WTC11 (cell line): ENCODE measurements at regions of chr16 and their contacts with region 1.

Region 1: DNA sequence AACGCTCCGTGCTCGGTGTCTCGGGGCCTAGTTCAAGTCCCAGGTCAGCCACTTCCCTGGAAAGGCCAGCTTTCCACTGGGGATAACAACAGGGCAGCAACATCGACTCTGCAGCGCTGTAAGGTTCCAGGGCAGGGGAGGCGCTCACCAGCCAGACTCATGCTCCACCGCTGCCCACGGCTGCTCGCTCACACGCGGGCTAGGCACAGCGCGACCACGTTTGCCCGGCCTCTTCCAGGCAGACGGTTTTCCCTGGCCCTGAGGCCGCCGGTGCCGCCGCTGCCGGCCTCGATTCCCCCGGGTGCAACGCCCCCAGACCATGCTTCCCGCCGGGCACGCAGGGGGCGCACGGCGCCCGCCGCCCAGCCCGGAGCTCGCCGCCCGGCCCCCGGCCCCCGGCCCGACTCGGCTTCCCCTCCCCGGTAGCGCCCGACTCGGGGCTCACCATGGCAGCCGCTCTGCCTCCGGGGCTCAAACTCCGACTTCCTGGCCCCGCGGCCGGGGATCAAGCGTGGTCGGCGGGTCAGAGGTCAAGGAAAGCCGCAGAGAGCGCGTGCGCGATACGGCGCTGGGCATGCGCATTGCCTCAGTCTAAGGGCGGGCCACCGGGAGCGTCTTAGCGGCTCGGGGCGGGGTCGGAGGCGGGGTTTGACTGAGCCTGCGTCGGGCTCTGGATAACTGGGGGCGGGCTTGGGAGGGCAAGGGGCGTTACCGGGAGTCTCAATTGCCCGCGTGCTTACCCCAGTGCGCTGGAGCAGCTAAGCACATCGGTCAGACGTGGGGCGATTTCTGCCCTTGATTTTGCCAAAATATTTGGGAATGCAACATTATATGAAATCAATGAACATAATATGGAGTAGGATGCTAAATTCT is at the start of gene PAM16:
- DNase-seq: peak; percentile 99
- ATAC-seq: peak; percentile 96
- H3K4me3 Mint-ChIP-seq: peak within 1 kb of the TSS; percentile 95
- H3K27ac Mint-ChIP-seq: peak within 1 kb of the TSS; percentile 70
- H3K4me1 Mint-ChIP-seq: peaks cover 11% of the 10 kb centered on the region
- H3K27me3 Mint-ChIP-seq: 0 out of 2 replicates have a peak, but pooled peaks cover 3% of the 10 kb centered on the region
- CTCF ChIP-seq: no peak
- total RNA-seq, gene PAM16: 87.2 to 93.7 TPM (median 88.9 TPM) in 3 replicates

Region 2: DNA sequence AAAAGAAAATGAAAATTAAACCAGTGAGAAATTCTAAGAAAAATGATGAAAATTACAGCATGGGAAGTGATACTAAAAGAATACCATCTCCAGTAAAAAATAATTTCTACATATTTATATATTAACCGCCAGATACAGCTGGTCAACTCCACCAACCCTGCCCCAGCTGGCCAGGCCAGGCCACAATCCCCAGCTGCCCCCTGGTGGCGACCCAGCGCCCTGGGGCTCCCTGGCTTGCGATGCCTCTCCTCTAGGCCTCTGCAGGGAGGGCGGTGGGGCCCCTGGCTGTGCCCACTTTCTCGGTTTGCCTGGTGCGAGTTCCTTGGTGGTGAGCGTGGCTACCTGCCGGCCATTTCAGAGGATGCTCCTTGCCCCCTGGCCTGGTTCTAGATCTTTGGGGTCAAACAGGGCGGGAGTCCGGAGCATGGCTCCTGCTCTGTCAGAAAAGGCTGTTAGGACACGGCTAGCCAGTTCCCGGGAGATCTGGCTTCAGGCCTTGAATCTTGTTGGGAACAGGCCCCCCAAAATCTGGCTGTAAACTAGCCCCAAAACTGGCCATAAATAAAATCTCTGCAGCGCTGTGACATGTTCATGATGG is 20.6 kb before region 1 on chr16:
- CTCF ChIA-PET with region 1: interaction called, 22 read pairs
- POLR2A ChIA-PET with region 1: interaction called, 5 read pairs
- DNase-seq: peak; percentile 86
- ATAC-seq: peak; percentile 27
- H3K4me3 Mint-ChIP-seq: no peak overlapping the region
- H3K27ac Mint-ChIP-seq: no peak overlapping the region
- H3K4me1 Mint-ChIP-seq: peaks cover 18% of the 10 kb centered on the region
- H3K27me3 Mint-ChIP-seq: no peaks in the 10 kb centered on the region
- CTCF ChIP-seq: peak; percentile 93

Region 3: DNA sequence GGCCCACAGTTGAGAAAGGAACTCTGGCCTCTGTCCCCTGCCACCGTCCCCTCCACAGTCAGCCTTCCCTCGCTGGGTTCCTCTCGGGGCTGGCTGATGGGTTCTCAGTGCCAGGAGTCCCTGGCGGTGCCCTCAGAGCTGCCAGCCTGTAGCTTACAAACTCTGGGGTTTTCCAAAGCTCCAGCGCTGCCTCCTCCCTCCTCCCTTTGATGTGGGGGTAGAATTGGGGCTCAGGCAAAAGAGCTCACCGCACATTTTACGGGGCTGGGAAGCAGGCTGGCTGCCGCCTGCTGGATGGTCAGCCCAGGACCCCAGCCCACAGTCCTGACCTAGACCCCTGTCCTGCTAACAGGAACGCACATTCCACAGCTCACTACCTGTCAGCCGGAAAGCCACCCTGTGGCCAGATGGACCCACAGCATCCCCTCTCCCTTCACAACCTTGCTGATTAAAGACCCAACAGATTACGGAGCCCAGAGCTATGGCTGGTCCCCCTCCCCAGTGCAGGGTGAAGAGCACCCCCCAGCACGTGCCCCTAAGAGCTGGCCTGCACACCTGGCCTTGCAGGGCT is 26.6 kb after region 1 on chr16:
- CTCF ChIA-PET with region 1: interaction called, 18 read pairs
- POLR2A ChIA-PET with region 1: no interaction called
- DNase-seq: no peak
- ATAC-seq: peak; percentile 46
- H3K4me3 Mint-ChIP-seq: no peak overlapping the region
- H3K27ac Mint-ChIP-seq: peak overlapping the region; percentile 64
- H3K4me1 Mint-ChIP-seq: peaks cover 47% of the 10 kb centered on the region
- H3K27me3 Mint-ChIP-seq: no peaks in the 10 kb centered on the region
- CTCF ChIP-seq: no peak

Region 4: DNA sequence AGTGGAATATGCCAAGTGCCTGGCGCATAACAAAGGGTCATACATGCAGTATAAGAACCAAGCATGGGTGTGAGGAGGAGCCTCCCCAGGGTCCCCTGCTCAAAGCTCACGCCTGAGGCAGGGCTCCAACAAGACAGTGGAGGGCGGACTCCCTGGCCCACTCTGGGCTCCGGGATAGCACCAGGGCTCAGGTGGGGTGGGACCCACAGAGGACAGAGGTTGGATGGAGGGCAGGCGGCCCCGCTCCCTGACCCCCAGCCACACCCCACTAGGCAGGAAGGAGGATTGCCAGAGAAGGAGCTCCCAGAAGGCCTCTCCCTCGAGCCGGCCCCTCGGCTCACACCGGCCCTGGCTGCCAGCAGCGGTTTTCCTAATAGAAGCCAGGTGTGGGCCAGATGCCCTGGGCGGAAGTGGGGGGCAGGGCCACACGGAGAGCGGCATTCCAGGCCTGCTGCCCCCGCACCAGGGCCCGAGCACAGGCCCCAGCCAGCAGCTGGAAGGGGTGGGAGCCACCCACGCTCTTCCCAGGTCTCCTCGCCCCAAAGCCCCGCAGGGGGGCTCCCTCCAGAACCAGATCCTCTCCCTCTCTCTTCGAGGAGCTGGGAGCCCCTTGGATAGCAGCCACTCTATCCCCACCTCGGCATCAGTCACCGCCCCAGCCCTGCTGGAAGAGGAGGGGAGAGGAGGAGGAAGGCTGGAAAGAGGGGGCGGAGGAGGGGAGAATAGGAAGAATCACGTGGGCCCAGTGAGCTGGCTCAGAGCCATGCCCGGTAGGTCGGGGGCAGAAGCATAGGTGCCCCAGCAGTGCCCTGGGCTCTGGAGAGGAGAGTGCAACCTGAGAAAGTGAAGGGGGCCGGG is 41.6 kb after region 1 on chr16:
- CTCF ChIA-PET with region 1: interaction called, 17 read pairs
- POLR2A ChIA-PET with region 1: interaction called, 6 read pairs
- DNase-seq: peak; percentile 81
- ATAC-seq: peak; percentile 76
- H3K4me3 Mint-ChIP-seq: peak overlapping the region; percentile 20; the same call in 1 of the 2 replicates
- H3K27ac Mint-ChIP-seq: peak overlapping the region; percentile 92
- H3K4me1 Mint-ChIP-seq: peaks cover 48% of the 10 kb centered on the region
- H3K27me3 Mint-ChIP-seq: no peaks in the 10 kb centered on the region
- CTCF ChIP-seq: no peak

Region 5: DNA sequence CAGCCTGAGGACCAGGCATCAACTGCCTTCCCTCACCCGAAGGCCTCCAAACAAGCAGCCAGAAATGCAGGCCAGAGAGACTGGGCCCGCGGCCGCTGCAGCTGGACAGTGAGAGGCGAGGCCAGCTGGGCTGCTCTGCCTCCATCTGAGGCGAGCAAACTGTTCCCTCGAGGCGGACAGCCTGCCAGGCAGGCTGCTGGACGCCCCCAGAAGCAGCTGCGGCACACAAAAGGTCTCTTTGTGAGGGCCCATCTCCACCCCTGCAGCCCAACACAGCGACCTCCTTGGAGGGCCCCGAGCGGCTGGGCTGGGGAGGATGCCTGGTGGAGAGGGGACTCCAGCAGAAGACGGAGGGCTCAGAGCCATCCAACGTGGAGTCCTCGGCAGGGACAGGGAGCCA is 60.7 kb after region 1 on chr16:
- CTCF ChIA-PET with region 1: no interaction called
- POLR2A ChIA-PET with region 1: no interaction called
- DNase-seq: no peak
- ATAC-seq: no peak
- H3K4me3 Mint-ChIP-seq: no peak overlapping the region
- H3K27ac Mint-ChIP-seq: no peak overlapping the region
- H3K4me1 Mint-ChIP-seq: peaks cover 5% of the 10 kb centered on the region
- H3K27me3 Mint-ChIP-seq: no peaks in the 10 kb centered on the region
- CTCF ChIP-seq: no peak